Head of caudate nucleus (tissue), 42 donors: ENCODE measurements at regions of chr13 and their contacts with region 1.

Region 1: DNA sequence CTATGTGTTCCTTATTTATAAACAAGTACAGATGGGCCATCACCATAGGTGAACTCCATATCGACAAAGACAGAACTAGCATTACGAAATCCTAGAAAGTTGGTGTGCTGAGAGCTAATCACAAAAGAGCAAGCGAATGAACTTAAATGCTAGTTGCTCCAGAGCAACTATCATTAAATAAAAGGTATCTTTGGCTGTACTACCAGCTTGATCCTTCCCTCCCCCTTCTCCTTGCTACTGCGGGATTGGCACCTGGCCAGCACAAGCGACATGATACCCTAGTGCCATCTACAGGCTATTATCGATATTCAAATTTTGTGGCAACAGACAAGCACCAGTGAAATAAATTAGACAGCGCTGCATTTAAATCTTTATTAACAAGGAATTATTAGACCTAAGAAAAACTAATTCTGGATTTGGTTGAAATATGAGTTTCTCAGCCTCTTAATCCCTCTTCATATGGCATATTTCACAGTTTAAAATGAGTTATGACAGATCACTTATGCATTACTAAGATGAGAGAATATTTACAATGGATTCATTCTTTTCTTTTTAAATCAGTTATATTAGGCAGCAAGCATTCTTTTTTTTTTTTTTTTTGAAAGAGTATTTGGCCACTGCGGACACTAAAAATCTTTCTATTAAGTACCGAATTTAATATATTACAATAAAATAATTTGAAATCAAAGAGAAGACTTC is 5.8 kb downstream of the PCDH9 start:
- DNase-seq: peak; percentile 70 to 95 (median 86)

Region 2: DNA sequence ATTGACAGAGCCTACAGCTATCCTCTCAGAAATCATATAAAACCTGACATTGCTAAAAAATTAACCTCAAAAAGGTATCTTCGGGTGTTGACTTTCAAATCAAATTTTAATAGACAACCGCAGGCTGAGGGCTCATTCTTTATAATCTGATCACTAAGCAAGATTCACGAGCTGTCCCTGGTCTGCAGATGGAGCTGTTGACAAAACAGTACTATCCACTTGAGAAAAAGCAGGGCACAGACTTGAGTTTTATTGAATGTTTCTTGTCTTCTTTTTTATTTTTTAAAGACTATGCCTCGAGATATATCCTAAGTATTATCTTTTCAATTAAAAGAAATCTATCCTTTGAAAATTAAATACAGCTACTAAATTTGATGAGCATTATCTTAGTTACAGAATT is 534.7 kb before region 1 on chr13:
- intact Hi-C with region 1: loop called (anchors 10 kb)
- DNase-seq: peak in 29 of 42 donors; percentile 5 to 73 (median 45)

Region 3: DNA sequence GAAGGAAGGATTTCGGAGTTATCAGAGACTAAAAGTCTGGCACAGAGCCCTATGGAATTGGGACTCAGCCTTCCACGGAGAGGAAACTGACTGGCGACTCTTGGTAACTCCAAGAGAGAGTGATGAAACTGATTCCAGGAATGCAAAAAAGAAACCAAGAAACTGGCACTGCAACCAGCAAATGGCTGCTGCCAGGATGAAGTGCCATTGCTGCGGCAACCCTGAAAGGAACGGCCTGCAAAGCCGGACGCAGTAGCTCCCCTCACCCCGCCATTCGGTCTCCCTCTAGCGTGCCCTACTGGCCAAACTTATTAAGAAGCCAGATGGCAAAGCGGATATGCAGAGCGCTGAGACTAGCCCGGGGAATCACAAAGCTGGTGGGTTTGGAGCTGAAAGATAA is 230.2 kb before region 1 on chr13:
- intact Hi-C with region 1: loop called (anchors 10 kb)
- DNase-seq: peak; percentile 67 to 95 (median 88)

Region 4: GRCh38 chr13:67075239-67075638 is 149.1 kb before region 1 on chr13:
- intact Hi-C with region 1: loop called (anchors 10 kb)
- DNase-seq: peak in 2 of 42 donors; percentile 34

Region 5: GRCh38 chr13:67147342-67148133 is 76.8 kb before region 1 on chr13:
- intact Hi-C with region 1: loop called (anchors 10 kb)
- DNase-seq: peak in 2 of 42 donors; percentile 12 to 40

Region 6: GRCh38 chr13:67343777-67344176 is 119.5 kb after region 1 on chr13:
- intact Hi-C with region 1: no loop called
- DNase-seq: no peak